Activated naive CD4-positive, alpha-beta T cell treated with anti-CD3 and anti-CD28 coated beads for 36 hours (primary cell): ENCODE measurements at regions of chr10 and their contacts with region 1.

Region 1: GRCh38 chr10:10589540-10590303 is 427.9 kb upstream of the CELF2 start:
- DNase-seq: peak; percentile 57
- H3K4me3 Mint-ChIP-seq: no peak overlapping the region
- H3K27ac Mint-ChIP-seq: no peak overlapping the region
- H3K4me1 Mint-ChIP-seq: peaks cover 6% of the 10 kb centered on the region
- H3K27me3 Mint-ChIP-seq: peaks cover 17% of the 10 kb centered on the region

Region 2: GRCh38 chr10:10418387-10418786 is 171.3 kb before region 1 on chr10:
- CTCF ChIA-PET with region 1: no interaction called
- intact Hi-C with region 1: loop called (anchors 1 kb)
- DNase-seq: peak; percentile 47
- H3K4me3 Mint-ChIP-seq: no peak overlapping the region
- H3K27ac Mint-ChIP-seq: no peak overlapping the region
- H3K4me1 Mint-ChIP-seq: peaks cover 35% of the 10 kb centered on the region
- H3K27me3 Mint-ChIP-seq: no peaks in the 10 kb centered on the region

Region 3: GRCh38 chr10:10892290-10892875 is 302.7 kb after region 1 on chr10:
- CTCF ChIA-PET with region 1: no interaction called
- intact Hi-C with region 1: no loop called
- DNase-seq: no peak
- H3K4me3 Mint-ChIP-seq: no peak overlapping the region
- H3K27ac Mint-ChIP-seq: no peak overlapping the region
- H3K4me1 Mint-ChIP-seq: no peaks in the 10 kb centered on the region
- H3K27me3 Mint-ChIP-seq: peaks cover 4% of the 10 kb centered on the region

Region 4: DNA sequence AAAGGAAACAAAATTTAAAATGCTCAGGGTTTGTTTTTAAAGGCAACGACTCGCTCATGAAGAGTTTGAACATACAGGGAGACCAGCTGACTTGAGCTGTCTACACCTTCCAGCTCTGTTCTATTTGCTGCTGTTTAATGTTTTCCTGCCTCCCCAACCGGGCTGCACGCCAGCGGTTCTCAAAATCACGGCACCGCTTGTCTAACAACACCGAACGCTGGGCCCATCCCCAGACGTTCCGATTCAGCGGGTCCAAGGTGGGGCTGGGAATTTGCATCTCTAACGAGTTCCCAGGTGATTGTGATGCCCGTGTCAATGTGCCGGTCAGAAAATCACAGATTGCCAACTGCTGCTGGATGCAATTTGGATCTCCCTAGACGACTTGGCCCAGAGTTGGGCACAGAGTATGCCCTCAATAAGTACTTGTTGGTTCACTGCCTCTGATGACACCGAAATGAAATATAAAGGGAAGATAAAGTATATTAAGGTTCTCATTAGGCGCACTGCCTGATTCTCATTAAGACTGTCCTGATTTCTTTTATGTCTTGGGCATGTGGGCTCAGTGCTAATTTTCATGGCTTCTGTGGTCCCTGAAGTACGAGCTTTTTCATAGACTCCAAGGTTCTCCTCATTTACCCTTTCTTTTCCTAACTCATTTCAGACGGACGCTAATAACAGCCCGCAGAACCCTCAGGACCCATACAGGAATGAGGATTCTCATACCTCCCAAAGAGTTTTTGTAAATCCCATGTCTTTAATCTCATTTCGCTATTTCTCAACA is 456.5 kb after region 1 on chr10:
- CTCF ChIA-PET with region 1: no interaction called
- intact Hi-C with region 1: no loop called
- DNase-seq: no peak
- H3K4me3 Mint-ChIP-seq: no peak overlapping the region
- H3K27ac Mint-ChIP-seq: no peak overlapping the region
- H3K4me1 Mint-ChIP-seq: no peaks in the 10 kb centered on the region
- H3K27me3 Mint-ChIP-seq: peaks cover 6% of the 10 kb centered on the region